Gastrocnemius medialis (tissue), 4 donors: ENCODE measurements at regions of chr5 and their contacts with region 1.

Region 1: DNA sequence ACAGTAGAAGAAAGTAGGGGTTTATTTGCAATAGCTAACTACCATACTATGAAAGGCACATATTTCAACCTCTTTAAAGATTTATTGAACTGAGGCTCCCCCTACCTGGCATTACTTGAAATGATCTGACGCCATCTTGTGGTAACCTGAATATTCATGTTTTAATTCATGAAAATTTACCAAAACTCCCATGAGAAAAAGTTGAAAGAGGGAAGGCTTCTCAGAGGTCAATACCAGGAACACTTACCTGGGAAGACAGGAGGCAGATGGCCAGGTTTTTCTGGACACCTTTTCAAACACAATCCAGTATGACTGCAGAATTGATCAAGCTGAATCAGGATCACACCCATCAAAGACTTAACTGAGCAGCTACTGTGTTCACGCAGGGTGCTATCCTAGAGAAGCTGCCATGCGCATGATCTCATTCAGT is 9.4 kb downstream of the PRELID2 start:
- DNase-seq: no peak
- ATAC-seq: no peak
- H3K4me3 ChIP-seq: no peak overlapping the region
- H3K27ac ChIP-seq: no peak overlapping the region
- H3K4me1 ChIP-seq: peaks cover 0 to 10% of the 10 kb centered on the region in 2 donors
- H3K27me3 ChIP-seq: no peaks in the 10 kb centered on the region
- CTCF ChIP-seq: peak; percentile 22 to 61 (median 45)
- POLR2A ChIP-seq: no peak

Region 2: DNA sequence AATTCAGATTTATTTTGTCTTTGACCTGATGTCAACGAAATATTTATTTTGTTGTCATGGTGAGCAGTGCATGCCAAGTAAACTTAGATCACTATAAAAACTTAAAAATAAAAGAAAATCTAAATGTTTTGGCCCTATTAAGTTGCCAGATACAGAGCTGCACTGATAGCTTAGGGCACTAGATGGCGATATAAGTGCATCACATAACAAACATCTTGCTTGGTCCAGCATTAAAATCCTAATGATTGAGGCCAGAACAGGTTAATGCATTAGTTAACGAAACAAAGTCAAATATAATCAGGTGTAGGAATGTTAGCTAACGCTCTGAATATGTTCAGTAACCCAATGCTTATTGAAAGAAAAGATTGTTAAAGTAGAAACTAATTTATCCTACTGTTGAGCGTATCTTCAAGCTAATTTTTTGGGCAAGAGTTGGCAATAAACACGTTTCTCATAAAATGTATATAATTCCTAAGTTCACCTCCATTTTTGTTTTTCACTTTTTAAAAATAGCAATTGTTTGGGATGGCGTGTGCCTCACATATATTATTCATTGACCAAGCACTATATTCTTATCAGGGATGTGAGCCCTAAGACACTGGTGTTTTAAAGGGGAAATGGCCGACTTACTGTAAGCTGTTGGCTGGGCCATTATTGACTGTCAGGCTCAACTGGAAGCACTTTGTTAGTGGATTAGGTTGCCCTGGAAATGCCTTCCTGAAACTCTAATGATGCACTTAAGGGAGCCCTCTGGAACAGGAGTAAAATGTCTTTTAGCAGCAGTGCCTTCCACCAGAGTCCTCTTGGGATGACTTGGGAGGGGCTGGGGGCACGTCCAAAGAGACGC is 1621.8 kb before region 1 on chr5:
- in situ Hi-C with region 1: loop called (anchors 10 to 25 kb)
- intact Hi-C with region 1: loop called (anchors 10 kb)
- DNase-seq: no peak
- ATAC-seq: peak; percentile 52 to 70
- H3K4me3 ChIP-seq: no peak overlapping the region
- H3K27ac ChIP-seq: no peak overlapping the region
- H3K4me1 ChIP-seq: peaks cover 0 to 7% of the 10 kb centered on the region in 2 donors
- H3K27me3 ChIP-seq: peaks cover 17 to 36% (median 19%) of the 10 kb centered on the region in 3 donors
- CTCF ChIP-seq: peak; percentile 50 to 83 (median 74)
- POLR2A ChIP-seq: no peak

Region 3: GRCh38 chr5:145637396-145637795 is 188.4 kb before region 1 on chr5:
- in situ Hi-C with region 1: no loop called
- intact Hi-C with region 1: no loop called
- DNase-seq: no peak
- ATAC-seq: no peak
- H3K4me3 ChIP-seq: no peak overlapping the region
- H3K27ac ChIP-seq: no peak overlapping the region
- H3K4me1 ChIP-seq: no peaks in the 10 kb centered on the region
- H3K27me3 ChIP-seq: no peaks in the 10 kb centered on the region
- CTCF ChIP-seq: no peak
- POLR2A ChIP-seq: no peak

Region 4: DNA sequence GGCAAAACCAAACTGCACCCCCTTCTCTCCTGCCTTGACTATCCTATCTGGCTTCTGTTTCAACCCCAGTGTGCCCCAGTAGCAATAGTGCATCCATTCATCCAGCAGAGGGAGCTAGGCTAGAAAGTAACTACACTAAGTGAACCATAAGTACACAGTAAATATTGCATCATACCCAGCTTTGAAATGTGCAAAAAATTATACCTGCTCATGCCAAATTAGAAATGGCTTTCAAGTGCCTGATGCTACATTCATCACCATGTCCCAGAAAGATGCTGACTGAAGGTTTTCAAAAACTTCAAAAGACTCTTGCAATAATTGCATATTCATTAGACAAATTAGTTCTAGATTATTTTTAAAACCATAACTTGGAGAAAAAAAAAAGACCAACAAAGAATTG is 144.1 kb before region 1 on chr5:
- in situ Hi-C with region 1: loop called in 1 of 4 experiments (anchors 10 kb)
- intact Hi-C with region 1: loop called (anchors 5 kb)
- DNase-seq: peak; percentile 8 to 30
- ATAC-seq: peak; percentile 65 to 86
- H3K4me3 ChIP-seq: no peak overlapping the region
- H3K27ac ChIP-seq: no peak overlapping the region
- H3K4me1 ChIP-seq: peaks cover 0 to 7% of the 10 kb centered on the region in 2 donors
- H3K27me3 ChIP-seq: no peaks in the 10 kb centered on the region
- CTCF ChIP-seq: peak; percentile 28 to 63 (median 52)
- POLR2A ChIP-seq: no peak

Region 5: GRCh38 chr5:145872486-145872885 is 46.7 kb after region 1 on chr5:
- in situ Hi-C with region 1: no loop called
- intact Hi-C with region 1: no loop called
- DNase-seq: no peak
- ATAC-seq: no peak
- H3K4me3 ChIP-seq: no peak overlapping the region
- H3K27ac ChIP-seq: no peak overlapping the region
- H3K4me1 ChIP-seq: no peaks in the 10 kb centered on the region
- H3K27me3 ChIP-seq: no peaks in the 10 kb centered on the region
- CTCF ChIP-seq: no peak
- POLR2A ChIP-seq: no peak